ENCODE measurements at regions of chr19 and their contacts with region 1.

Region 1: GRCh38 chr19:3665681-3666544 is 34.4 kb downstream of the PIP5K1C start:
- DNase-seq: peak in 1 of 2 donors; percentile 73
- ATAC-seq: peak; percentile 72

Region 2: DNA sequence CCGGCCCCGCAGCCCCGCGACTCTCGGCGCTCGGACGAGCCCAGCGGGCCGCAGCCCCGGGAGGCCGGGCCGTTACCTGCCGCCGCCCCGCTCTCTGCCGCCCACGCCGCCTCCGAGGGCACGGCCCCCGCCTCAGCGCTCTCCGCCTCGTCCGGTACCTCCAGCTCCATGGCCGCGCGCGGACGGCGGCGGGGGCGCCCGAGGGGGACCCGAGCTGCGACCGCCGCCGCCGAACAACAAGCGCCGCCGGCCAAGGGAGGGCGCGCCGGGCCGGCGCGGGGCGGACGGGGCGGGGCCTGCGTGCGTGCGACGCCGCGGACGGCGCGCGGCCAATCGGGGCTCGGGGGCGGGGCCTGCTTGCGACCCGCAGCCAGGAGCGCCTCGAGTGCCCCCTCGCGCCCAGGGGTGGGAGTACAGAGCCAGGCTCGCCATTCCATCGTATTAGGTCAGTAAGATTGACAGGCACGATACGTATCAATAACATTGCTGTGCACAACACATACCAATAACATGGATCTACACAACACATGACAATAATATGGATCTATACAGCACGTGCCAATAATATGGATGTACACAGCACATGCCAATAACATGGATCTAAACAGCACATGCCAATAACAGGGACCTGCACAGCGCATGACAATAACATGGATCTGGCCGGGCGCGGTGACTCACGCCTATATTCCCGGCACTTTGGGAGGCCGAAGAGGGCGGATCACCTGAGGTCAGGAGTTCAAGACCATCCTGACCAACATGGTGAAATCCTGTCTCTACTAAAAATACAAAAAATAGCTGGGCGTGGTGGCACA is 34.5 kb after region 1 on chr19 and contains the start of gene PIP5K1C:
- intact Hi-C with region 1: loop called (anchors 5 kb)
- DNase-seq: peak; percentile 79 to 95
- ATAC-seq: peak; percentile 94
- total RNA-seq, gene PIP5K1C: 25.1 to 33.1 TPM

Measured in left colon (tissue), 2 donors.